HAP-1 (cell line): ENCODE measurements at regions of chr14 and their contacts with region 1.

Region 1: GRCh38 chr14:66606826-66607225 is 98.9 kb downstream of the GPHN start:
- DNase-seq: peak; percentile 42 to 46
- H3K4me3 ChIP-seq: no peak overlapping the region
- H3K4me1 ChIP-seq: peaks cover 36% of the 10 kb centered on the region
- H3K27me3 ChIP-seq: no peaks in the 10 kb centered on the region

Region 2: GRCh38 chr14:66425402-66425801 is 181.4 kb before region 1 on chr14:
- in situ Hi-C with region 1: no loop called
- DNase-seq: no peak
- H3K4me3 ChIP-seq: no peak overlapping the region
- H3K4me1 ChIP-seq: peaks cover 5% of the 10 kb centered on the region; the same call in 1 of the 2 replicates
- H3K27me3 ChIP-seq: no peaks in the 10 kb centered on the region

Region 3: GRCh38 chr14:66507722-66508546 is 98.9 kb before region 1 on chr14 and contains the start of gene GPHN:
- in situ Hi-C with region 1: loop called (anchors 5 kb)
- DNase-seq: peak; percentile 97 to 99
- H3K4me3 ChIP-seq: peak within 1 kb of the TSS; percentile 82
- H3K4me1 ChIP-seq: peaks cover 21% of the 10 kb centered on the region
- H3K27me3 ChIP-seq: no peaks in the 10 kb centered on the region